ENCODE measurements at regions of chr2 and their contacts with region 1.

Region 1: GRCh38 chr2:48107326-48107925 is 201.1 kb upstream of the FBXO11 start:
- DNase-seq: no peak
- ATAC-seq: no peak
- H3K4me3 ChIP-seq: no peak overlapping the region
- H3K27ac ChIP-seq: peak overlapping the region; percentile 36 to 68
- H3K4me1 ChIP-seq: peaks cover 8 to 49% of the 10 kb centered on the region in 2 donors
- H3K27me3 ChIP-seq: no peaks in the 10 kb centered on the region
- CTCF ChIP-seq: no peak

Region 2: GRCh38 chr2:47850198-47850597 is 257.2 kb before region 1 on chr2:
- intact Hi-C with region 1: loop called in 1 of 2 experiments (anchors 10 kb)
- DNase-seq: no peak
- ATAC-seq: no peak
- H3K4me3 ChIP-seq: no peak overlapping the region
- H3K27ac ChIP-seq: no peak overlapping the region
- H3K4me1 ChIP-seq: peaks cover 0 to 14% of the 10 kb centered on the region in 2 donors
- H3K27me3 ChIP-seq: no peaks in the 10 kb centered on the region
- CTCF ChIP-seq: no peak

Region 3: GRCh38 chr2:48221846-48222516 is 114.6 kb after region 1 on chr2:
- intact Hi-C with region 1: no loop called
- DNase-seq: no peak
- ATAC-seq: no peak
- H3K4me3 ChIP-seq: no peak overlapping the region
- H3K27ac ChIP-seq: peak overlapping the region in 1 of 2 donors; percentile 30
- H3K4me1 ChIP-seq: peaks cover 0 to 23% of the 10 kb centered on the region in 2 donors
- H3K27me3 ChIP-seq: no peaks in the 10 kb centered on the region
- CTCF ChIP-seq: no peak

Region 4: DNA sequence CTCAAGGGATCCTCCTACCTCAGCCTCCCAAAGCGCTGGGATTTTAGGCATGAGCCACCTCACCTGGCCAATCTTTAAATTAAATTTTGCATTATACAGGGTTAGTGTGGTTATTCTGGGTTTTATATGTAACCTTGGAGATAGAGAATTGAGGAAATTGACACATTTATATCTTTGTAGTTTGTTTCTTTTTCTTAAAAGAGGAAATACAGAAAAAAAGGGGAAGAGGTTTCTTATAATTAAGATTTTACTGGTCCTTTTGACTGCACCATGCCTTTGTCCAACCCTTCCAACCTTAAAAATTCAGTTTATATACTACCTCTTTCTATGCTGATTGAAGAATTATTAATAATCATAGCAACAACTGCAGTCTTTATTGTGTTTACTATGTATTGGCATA is 212.4 kb after region 1 on chr2:
- intact Hi-C with region 1: no loop called
- DNase-seq: no peak
- ATAC-seq: no peak
- H3K4me3 ChIP-seq: no peak overlapping the region
- H3K27ac ChIP-seq: peak overlapping the region in 1 of 2 donors; percentile 76
- H3K4me1 ChIP-seq: peaks cover 9 to 77% of the 10 kb centered on the region in 2 donors
- H3K27me3 ChIP-seq: no peaks in the 10 kb centered on the region
- CTCF ChIP-seq: no peak